ENCODE measurements at regions of chr11 and their contacts with region 1.

Region 1: DNA sequence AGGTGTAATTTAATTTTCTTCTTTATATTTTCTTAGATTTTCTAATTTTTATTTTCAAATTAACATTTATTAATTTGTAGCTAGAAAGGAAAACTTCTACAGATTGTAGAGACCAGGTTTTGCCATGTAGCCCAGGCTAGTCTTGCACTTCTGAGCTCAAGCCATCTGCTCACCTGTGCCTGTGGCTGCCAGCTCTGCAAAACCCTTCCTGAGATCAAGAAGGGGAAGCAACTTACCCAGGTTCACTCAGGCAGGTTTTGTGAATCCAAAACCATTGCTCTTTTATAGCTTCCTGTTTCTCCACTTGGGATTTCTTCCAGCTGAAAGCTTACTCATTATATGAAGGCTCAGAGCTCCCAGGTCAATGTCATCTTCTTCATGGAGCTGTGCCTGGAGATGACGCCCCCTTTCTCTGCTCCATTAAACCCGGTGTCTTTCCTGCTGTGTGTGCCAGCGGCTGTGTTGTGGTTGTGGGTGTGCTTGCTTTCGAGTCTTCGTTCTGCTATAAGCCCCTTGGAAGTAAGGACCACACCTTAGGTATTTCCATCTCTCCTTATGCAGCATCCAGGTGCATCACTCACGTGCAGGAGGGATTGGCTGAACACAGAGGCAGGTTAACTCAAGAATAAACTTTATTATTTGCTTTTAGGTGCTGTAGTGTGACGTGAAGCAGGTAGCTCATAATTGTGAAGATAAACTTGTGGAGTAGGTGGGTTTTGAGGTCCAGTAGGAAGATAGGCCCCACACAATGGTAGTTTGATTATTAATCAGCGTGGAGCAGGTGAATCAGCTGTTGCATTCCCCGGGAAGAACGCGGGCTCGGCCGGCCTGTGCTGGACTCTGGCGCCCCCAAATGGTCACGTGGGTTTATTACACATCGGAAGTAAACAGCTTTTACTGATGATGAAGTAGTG is 42.2 kb upstream of the INCENP start:
- DNase-seq: peak; percentile 77 to 94 (median 87)
- H3K4me3 ChIP-seq: no peak overlapping the region
- H3K27ac ChIP-seq: no peak overlapping the region
- H3K4me1 ChIP-seq: peaks cover 0 to 10% of the 10 kb centered on the region in 2 donors
- H3K27me3 ChIP-seq: no peaks in the 10 kb centered on the region
- CTCF ChIP-seq: peak; percentile 87 to 96 (median 94)
- POLR2A ChIP-seq: no peak

Region 2: GRCh38 chr11:61783717-61784519 is 297.7 kb before region 1 on chr11:
- intact Hi-C with region 1: no loop called
- DNase-seq: no peak
- H3K4me3 ChIP-seq: no peak overlapping the region
- H3K27ac ChIP-seq: no peak overlapping the region
- H3K4me1 ChIP-seq: no peaks in the 10 kb centered on the region
- H3K27me3 ChIP-seq: no peaks in the 10 kb centered on the region
- CTCF ChIP-seq: no peak
- POLR2A ChIP-seq: no peak

Region 3: DNA sequence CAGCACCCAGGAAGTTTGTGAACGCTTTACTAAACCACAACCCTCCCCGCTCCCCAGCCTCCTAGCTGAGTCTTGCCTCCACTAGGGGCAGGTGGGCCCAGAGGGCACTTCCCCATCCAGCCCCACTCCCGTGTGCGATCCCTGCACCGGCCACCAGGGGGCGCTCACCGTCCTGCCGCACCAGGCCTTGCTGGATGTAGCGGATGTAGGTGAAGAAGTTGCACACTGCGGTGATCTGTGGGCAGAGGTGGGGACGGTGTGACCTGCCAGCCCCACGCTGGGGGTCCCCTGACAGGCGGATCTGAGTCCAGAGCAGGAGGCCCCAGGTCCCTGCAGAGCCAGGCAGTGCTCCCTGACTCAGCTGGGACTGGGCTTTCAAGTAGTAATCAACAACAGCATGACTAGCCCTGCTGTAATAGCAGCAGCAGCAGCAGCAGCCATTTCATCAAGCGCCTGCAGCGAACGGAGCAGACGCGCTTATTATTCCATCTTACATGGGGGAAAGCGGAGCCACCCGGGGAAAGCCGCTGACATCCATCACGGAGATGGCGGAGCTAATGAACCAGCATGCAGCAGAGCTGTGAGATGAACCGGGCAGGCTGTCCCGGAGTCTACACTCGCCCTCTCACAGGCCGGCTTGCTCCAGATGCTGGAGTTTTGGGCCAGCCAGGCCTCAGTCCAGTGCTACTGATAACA is 182.3 kb before region 1 on chr11:
- intact Hi-C with region 1: loop called (anchors 5 kb)
- DNase-seq: peak; percentile 77 to 91 (median 82)
- H3K4me3 ChIP-seq: no peak overlapping the region
- H3K27ac ChIP-seq: peak overlapping the region in 1 of 5 donors; percentile 47
- H3K4me1 ChIP-seq: no peaks in the 10 kb centered on the region
- H3K27me3 ChIP-seq: no peaks in the 10 kb centered on the region
- CTCF ChIP-seq: peak; percentile 98 to 100 (median 99)
- POLR2A ChIP-seq: no peak

Region 4: GRCh38 chr11:61947486-61948210 is 134.0 kb before region 1 on chr11:
- intact Hi-C with region 1: loop called in 1 of 2 experiments (anchors 5 kb)
- DNase-seq: peak; percentile 85 to 97 (median 92)
- H3K4me3 ChIP-seq: no peak overlapping the region
- H3K27ac ChIP-seq: peak overlapping the region in 1 of 5 donors; percentile 23
- H3K4me1 ChIP-seq: peaks cover 0 to 6% of the 10 kb centered on the region in 2 donors
- H3K27me3 ChIP-seq: no peaks in the 10 kb centered on the region
- CTCF ChIP-seq: peak; percentile 84 to 97 (median 96)
- POLR2A ChIP-seq: peak in 1 of 2 donors; percentile 15

Region 5: GRCh38 chr11:61963282-61964057 is 118.2 kb before region 1 on chr11:
- intact Hi-C with region 1: loop called in 1 of 2 experiments (anchors 5 kb)
- DNase-seq: peak in 6 of 7 donors; percentile 32 to 74 (median 48)
- H3K4me3 ChIP-seq: peak overlapping the region in 1 of 4 donors; percentile 98
- H3K27ac ChIP-seq: peak overlapping the region in 4 of 5 donors; percentile 24 to 98 (median 70)
- H3K4me1 ChIP-seq: peaks cover 16 to 33% of the 10 kb centered on the region in 2 donors
- H3K27me3 ChIP-seq: no peaks in the 10 kb centered on the region
- CTCF ChIP-seq: no peak
- POLR2A ChIP-seq: peak; percentile 7 to 53

Region 6: GRCh38 chr11:62044639-62045121 is 37.0 kb before region 1 on chr11:
- intact Hi-C with region 1: no loop called
- DNase-seq: no peak
- H3K4me3 ChIP-seq: no peak overlapping the region
- H3K27ac ChIP-seq: no peak overlapping the region
- H3K4me1 ChIP-seq: no peaks in the 10 kb centered on the region
- H3K27me3 ChIP-seq: no peaks in the 10 kb centered on the region
- CTCF ChIP-seq: no peak
- POLR2A ChIP-seq: no peak